ENCODE measurements at regions of chr16 and their contacts with region 1.

Region 1: DNA sequence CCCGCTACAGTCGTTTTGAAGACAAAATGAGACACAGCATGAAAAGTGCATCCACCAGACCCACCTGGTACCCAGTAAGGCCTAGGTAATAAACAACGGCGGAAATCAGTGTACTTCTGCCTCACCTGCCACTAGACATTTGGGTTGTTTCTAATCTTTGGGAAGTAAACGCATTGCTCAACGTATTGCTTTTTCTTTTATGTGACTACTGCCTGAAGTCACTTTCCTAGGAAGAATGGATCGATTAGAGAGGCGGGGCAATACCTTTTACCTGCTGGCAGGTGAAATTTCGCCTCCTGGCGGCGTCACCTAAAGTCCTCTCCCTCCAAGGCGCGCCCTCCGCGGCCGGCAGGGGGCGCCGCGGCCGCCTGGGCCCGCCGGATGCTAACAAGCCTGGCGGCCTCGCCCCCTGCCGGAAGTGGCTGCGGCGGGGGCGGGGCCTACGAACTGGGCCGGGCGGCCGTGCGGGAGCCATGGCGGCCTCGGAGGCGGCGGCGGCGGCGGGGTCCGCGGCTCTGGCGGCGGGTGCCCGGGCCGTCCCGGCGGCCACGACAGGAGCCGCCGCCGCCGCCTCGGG is at the start of gene ATMIN:
- DNase-seq: peak; percentile 93
- H3K4me3 ChIP-seq: peak within 1 kb of the TSS; percentile 79
- H3K27ac ChIP-seq: peak within 1 kb of the TSS; percentile 38
- H3K4me1 ChIP-seq: no peaks in the 10 kb centered on the region
- H3K27me3 ChIP-seq: no peaks in the 10 kb centered on the region
- CTCF ChIP-seq: peak; percentile 88
- total RNA-seq, gene ATMIN: 43.5 and 44.6 TPM in 2 replicates

Region 2: DNA sequence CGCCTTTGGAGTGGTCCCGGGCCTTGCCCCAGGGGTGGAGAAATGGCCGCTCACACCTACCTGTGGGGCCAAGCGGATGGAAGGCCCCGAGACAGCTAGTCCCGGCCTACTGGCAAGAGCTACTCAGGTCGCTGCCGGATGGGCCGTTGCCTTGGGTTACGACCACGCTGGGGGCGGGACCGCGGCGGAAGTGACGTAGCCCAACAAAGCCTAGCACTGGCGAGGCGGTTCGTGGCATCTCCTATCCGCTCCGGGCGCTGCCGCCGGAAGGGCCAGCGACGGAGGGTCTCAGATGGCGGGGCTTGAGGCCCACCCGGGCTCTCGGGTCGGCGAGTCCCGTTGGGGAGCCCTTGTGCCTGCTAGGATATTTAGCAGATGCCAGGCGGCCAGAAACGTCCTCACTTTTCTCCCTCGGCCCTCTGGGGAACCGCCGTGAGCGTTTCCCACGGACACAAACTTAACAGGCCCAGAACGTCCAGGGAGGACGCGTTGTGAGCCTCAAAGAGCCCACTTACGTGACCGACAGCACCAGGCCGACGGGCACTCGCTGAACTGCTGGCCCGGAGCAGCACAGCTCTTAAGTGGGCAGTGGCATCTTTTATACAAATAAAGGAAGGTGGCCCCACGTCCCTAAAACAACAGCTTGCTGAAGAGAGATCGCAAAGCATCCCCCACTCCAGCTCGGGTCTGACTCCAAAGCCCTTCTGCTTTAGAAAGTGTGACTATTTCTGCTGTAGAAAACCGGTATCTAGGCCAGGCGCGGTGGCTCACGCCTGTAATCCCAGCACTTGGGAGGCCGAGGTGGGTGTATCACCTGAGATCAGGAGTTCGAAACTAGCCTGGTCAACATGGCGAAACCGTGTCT is 41.8 kb after region 1 on chr16 and contains the start of gene C16orf46:
- CTCF ChIA-PET with region 1: interaction called, 10 read pairs
- POLR2A ChIA-PET with region 1: no interaction called
- intact Hi-C with region 1: no loop called
- DNase-seq: peak; percentile 97
- H3K4me3 ChIP-seq: peak within 1 kb of the TSS; percentile 69
- H3K27ac ChIP-seq: peak within 1 kb of the TSS; percentile 93
- H3K4me1 ChIP-seq: no peaks in the 10 kb centered on the region
- H3K27me3 ChIP-seq: no peaks in the 10 kb centered on the region
- CTCF ChIP-seq: no peak
- total RNA-seq, gene C16orf46: 0.21 and 1.4 TPM in 2 replicates

Region 3: GRCh38 chr16:81214745-81215166 is 179.3 kb after region 1 on chr16:
- CTCF ChIA-PET with region 1: no interaction called
- POLR2A ChIA-PET with region 1: no interaction called
- intact Hi-C with region 1: loop called (anchors 10 kb)
- DNase-seq: no peak
- H3K4me3 ChIP-seq: no peak overlapping the region
- H3K27ac ChIP-seq: no peak overlapping the region
- H3K4me1 ChIP-seq: peaks cover 30% of the 10 kb centered on the region
- H3K27me3 ChIP-seq: no peaks in the 10 kb centered on the region
- CTCF ChIP-seq: no peak; the same call in 1 of the 2 replicates

Measured in A673 (cell line).